ENCODE measurements at regions of chr10 and their contacts with region 1.

Region 1: GRCh38 chr10:92598321-92598720 is 5.4 kb downstream of the KIF11 start:
- DNase-seq: no peak
- H3K4me3 ChIP-seq: no peak overlapping the region
- CTCF ChIP-seq: no peak
- POLR2A ChIP-seq: no peak

Region 2: DNA sequence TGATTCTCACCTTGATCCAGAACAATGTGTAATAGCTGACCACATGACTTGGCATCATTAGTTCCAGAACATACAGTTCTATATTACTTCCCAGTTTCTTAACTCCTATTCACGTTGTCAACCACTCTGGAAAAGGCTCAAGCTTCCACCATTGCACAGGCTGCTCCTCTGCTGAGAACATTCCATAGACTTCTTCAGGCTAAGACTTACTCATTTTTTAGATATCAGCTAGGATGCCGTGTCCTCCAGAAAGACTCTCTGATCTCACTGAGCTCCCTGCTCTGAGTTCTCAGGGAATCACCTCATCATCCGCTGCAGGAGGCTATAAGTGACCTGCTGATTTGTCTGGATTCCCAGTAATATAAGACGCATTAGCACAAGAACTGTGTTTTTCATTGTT is 1813.5 kb before region 1 on chr10:
- intact Hi-C with region 1: loop called (anchors 5 kb)
- DNase-seq: no peak
- H3K4me3 ChIP-seq: no peak overlapping the region
- CTCF ChIP-seq: no peak
- POLR2A ChIP-seq: no peak

Region 3: GRCh38 chr10:92799591-92800446 is 201.5 kb after region 1 on chr10:
- intact Hi-C with region 1: no loop called
- DNase-seq: no peak
- H3K4me3 ChIP-seq: no peak overlapping the region
- CTCF ChIP-seq: no peak
- POLR2A ChIP-seq: no peak